ENCODE measurements at regions of chr9 and their contacts with region 1.

Region 1: DNA sequence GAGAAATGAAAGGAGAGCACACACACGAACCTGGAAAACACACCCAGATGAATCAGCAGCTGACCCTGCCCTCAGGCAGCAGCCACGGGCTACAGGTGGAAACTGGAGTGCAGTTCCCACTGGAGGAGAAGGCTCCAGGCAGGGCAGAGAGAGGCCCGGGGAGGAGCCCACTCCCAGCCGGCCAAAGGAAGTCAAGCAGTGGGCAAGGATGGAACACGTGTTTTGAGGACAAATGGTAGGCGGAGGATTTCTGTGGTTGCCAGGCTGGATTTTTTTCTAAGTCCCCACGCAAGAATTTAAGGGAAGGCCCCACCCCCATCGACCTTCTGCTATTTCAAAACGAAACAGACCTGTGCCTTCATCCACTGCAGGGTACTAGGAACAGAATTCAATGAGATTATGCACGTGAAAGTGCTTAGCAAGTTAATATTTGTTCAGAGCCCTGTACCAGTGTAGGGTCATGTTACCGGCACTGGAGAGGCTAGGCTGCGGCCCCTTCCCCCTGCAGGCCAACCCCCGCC is 6.8 kb downstream of the EPB41L4B start:
- DNase-seq: no peak
- ATAC-seq: no peak

Region 2: DNA sequence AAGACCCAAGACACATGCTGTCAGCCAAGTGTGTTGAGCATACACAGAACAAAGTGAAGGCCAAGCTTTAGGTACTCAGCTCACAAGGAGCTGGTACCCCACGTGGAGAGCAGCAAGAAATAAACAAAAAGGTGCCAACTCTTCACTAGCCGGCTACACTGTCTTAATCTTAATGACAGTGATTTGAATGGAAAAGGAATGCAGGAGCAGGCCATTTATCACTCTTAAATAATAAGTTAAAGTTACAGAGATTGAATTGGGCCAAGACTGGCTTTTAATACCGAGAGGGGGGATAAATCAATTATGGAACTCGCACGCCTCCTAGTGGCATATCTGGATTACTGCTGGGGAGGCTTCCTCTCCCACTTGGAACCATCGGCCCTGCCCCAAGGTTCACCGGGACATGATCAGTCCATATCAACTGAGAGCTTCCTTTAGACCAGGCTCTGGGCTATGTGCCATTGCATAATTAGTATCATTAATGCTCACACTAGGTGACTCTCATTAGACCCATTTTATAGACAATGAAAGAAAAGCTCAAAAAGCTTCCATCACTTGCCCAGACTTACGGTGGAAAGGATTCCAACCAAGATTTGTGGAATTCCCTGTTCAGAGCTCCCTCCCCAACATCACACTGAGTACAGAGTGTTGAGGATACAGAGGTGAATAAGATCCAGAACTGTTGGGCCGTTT is 552.3 kb before region 1 on chr9:
- intact Hi-C with region 1: no loop called
- DNase-seq: peak; percentile 70
- ATAC-seq: peak; percentile 79

Region 3: DNA sequence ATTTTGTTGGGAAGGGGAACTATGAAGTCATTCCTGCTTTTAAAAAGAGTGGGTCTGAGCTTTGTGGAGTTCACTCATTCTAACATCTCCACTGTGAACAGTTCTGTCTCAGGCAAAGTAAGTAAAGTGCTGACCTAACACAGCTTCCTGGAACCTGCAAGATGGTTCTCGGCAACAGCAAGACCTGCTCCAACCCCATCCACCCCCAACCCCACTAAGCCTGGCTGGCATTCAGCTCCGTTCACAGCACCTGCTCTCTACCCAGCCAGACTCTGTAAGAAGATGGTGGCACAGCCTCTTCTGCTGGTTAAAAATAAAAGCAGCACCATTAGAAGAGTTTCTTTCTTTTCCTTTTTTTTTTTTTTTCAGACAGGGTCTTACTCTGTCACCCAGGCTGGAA is 35.2 kb before region 1 on chr9:
- intact Hi-C with region 1: loop called (anchors 2 kb)
- DNase-seq: no peak
- ATAC-seq: no peak

Measured in Right ventricle myocardium inferior (tissue), 1 donor.